ENCODE measurements at regions of chr10 and their contacts with region 1.

Region 1: DNA sequence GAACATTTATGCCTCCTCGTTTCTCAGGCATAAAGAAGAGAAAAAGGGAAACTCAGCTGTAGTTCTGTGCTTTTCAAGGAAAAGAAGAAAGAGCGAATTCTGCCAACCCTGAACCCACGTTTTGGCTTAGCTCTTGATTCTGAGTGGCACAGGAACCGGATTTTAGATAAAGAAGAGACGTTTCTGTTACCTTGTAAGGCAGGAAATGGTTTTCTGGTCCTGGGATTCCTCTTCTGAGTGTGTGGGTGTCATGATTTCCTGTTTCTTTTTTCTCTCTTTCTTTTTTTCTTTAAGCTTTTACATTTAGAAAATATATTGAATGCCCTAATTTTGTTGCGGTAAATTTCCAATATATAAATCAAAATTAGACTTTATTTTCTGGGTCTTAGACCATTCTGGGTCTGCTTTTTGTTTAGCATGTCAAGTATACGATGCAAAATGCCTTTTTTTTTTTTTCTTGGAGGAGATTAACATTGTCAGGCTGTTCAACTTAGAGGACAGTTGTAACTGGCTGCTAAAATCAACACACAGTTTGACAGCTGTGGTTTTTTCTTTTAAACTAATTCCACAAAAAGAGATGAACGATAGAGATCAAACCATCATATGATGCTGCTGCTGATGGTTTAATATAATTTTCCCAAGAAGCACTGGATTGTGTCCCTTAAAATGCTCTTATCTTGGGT is 190.8 kb downstream of the GATA3 start:
- DNase-seq: peak in 2 of 9 experiments; percentile 57 to 77
- ATAC-seq: peak; percentile 88
- H3K4me3 ChIP-seq: peak overlapping the region; percentile 3 to 18
- H3K4me3 Mint-ChIP-seq: peak overlapping the region; percentile 67
- H3K27ac ChIP-seq: peak overlapping the region in 1 of 2 experiments; percentile 74
- H3K27ac Mint-ChIP-seq: peak overlapping the region; percentile 81
- H3K4me1 ChIP-seq: peaks cover 29% of the 10 kb centered on the region
- H3K4me1 Mint-ChIP-seq: peaks cover 42% of the 10 kb centered on the region
- H3K27me3 ChIP-seq: no peaks in the 10 kb centered on the region
- H3K27me3 Mint-ChIP-seq: no peaks in the 10 kb centered on the region
- CTCF ChIP-seq: no peak

Region 2: GRCh38 chr10:8183241-8183704 is 62.0 kb before region 1 on chr10:
- CTCF ChIA-PET with region 1: no interaction called
- POLR2A ChIA-PET with region 1: no interaction called
- intact Hi-C with region 1: loop called in 1 of 2 experiments (anchors 10 kb)
- DNase-seq: peak in 8 of 9 experiments; percentile 2 to 88 (median 41)
- ATAC-seq: peak; percentile 89
- H3K4me3 ChIP-seq: no peak overlapping the region
- H3K4me3 Mint-ChIP-seq: peak overlapping the region; percentile 11
- H3K27ac ChIP-seq: peak overlapping the region in 1 of 2 experiments; percentile 55
- H3K27ac Mint-ChIP-seq: peak overlapping the region; percentile 89
- H3K4me1 ChIP-seq: peaks cover 16% of the 10 kb centered on the region
- H3K4me1 Mint-ChIP-seq: peaks cover 20% of the 10 kb centered on the region
- H3K27me3 ChIP-seq: no peaks in the 10 kb centered on the region
- H3K27me3 Mint-ChIP-seq: peaks cover 3% of the 10 kb centered on the region
- CTCF ChIP-seq: no peak

Measured in CD8-positive, alpha-beta T cell (primary cell).